ENCODE measurements at regions of chr14 and their contacts with region 1.

Region 1: GRCh38 chr14:23406244-23406643 is 1.8 kb downstream of the MYH6 start:
- DNase-seq: no peak
- H3K4me3 ChIP-seq: no peak overlapping the region
- CTCF ChIP-seq: no peak
- POLR2A ChIP-seq: no peak

Region 2: DNA sequence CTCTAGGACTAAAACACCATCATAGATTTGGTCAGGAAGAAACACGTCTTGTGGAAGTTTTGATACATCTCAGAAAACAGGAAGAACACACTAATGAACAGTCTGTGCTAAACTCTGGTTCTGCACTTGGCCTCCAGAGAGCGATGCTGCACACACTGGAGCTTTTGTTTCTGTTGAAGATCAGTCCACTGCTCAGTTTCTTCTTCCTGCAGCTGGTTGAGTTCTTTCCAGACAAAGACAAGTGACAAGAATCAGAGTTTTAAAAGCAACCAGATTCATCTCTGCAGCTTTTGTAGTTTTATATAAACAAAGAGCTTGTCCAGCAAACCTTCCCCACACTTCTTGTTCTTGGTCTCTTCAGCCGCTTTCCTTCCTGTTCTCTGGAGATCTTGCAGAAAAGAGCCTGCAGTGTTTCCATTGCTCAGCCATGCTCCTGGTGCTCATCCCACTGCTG is 1503.6 kb before region 1 on chr14:
- intact Hi-C with region 1: no loop called
- DNase-seq: no peak
- H3K4me3 ChIP-seq: no peak overlapping the region
- CTCF ChIP-seq: no peak
- POLR2A ChIP-seq: no peak

Region 3: GRCh38 chr14:22358726-22359125 is 1047.5 kb before region 1 on chr14:
- intact Hi-C with region 1: loop called (anchors 5 kb)
- DNase-seq: no peak
- H3K4me3 ChIP-seq: no peak overlapping the region
- CTCF ChIP-seq: no peak
- POLR2A ChIP-seq: no peak